ENCODE measurements at regions of chr18 and their contacts with region 1.

Region 1: DNA sequence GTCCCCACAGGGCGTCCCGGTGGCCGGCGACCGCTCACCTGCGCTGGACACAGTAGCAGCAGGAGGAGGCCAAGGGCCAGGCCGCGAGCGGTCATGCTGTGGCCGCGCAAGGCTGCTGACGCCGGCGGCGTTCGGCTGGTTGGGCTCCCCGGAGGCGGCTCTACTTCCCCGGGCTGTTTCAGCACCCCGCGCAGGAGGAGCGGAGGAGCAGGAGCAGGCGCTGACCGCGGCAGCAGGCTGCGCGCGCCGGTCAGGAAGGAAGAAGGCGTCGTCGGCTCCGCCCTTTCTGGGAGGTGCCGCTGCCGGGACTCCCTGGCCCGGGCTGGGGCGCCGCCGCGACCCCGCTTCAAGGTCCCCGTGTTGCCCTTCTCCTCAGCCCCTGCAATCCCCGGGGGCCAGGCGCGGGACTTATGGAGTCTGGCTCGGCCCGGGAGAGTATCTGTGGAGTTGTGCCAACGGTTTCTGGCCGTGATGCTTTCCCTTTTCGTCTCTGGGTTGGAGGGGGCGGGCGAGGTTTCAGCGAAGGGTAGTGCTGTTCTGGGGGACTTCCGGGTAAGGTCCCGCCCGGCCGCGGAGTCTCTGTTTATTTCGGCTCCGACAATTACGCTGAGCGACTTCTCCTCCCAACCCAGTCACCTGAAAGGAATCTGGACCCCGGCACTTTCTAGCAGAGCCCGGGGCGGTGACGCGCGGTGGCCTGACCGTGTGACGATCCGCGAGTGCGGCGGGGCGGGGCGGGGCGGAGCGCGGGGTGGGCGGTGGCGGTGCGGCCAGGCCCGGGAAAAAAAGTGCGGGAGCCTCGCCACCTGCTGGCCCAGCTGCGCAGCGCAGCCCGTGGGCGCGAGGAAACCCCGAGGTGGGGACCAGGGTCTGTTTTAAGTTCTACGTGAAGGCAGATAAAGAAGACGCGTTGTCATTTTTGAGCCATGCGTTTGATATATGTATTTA is at the start of gene NPC1:
- DNase-seq: peak; percentile 97
- H3K4me3 Mint-ChIP-seq: peak within 1 kb of the TSS; percentile 92
- H3K27ac Mint-ChIP-seq: peak within 1 kb of the TSS; percentile 83
- H3K4me1 Mint-ChIP-seq: peaks cover 37% of the 10 kb centered on the region
- H3K27me3 Mint-ChIP-seq: no peaks in the 10 kb centered on the region
- CTCF ChIP-seq: peak; percentile 97
- total RNA-seq, gene NPC1: 82.6 and 84.7 TPM in 2 replicates

Region 2: DNA sequence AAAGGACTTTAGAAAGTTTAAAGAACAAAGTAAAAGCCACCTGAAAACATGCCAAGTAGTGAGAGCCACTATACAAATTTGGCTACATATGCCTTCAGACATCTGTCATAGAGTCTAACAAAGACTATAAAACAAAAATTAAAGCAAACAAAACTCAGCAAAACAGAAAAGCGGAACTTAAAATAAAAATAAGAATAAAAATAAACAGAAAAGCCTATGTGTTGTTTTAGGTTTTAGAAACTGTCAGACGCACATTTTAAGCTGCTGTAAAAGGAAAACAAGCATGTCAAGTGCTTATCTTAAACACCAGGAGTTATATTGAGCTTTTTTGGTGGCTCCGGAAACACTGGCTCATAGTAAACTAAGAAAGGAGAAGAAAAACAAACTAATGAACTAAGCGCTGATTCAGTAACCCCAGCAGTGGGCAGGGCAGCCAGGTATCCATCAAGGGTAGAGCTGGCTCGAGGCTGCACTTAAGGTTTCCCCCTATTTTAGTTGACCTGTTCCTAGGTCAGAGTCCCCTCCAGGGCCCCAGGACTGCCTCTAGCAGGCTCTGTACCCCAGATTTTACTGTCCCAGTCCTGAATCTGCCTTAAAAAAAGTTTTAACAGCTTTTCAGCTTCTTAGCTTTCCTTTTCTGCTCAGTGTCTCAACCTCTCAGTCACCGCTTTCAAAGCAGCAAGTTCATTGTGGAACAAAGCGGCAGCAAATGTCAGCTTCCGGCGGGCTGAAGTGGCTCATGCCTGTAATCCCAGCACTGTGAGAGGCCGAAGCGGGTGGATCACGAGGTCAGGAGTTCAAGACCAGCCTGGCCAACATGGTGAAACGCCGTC is 98.6 kb before region 1 on chr18:
- CTCF ChIA-PET with region 1: no interaction called
- intact Hi-C with region 1: no loop called
- DNase-seq: peak; percentile 15
- H3K4me3 Mint-ChIP-seq: no peak overlapping the region
- H3K27ac Mint-ChIP-seq: no peak overlapping the region
- H3K4me1 Mint-ChIP-seq: peaks cover 14% of the 10 kb centered on the region
- H3K27me3 Mint-ChIP-seq: no peaks in the 10 kb centered on the region
- CTCF ChIP-seq: no peak

Region 3: DNA sequence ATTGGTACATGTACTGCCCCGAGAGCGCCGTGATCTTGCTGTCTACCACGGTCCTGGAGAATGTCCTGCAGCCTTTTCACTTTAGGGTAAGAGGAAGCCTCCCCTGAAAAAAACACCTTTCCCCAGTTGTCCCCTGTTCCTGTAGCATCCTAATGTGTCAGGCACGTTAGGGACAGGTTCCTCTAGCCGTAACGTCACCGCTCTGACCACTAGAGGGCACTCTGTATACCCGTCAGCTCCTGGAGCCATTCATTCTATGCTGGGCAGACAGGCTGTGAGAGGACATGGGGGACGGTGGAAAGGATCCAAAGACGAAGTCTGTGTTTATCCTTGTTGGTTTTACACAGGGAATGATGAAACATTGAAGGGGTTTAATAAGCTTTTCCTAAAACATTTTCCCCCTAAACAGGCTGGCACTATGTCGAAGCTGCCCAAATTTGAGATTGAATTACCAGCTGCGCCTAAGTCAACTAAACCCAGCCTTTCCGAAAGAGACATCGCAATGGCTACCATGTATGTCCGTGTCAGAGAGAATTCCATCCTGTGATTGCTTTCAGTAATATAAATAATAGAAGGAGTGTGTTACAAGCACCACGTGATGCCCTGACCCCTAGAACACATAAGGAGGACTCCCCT is 70.5 kb before region 1 on chr18:
- CTCF ChIA-PET with region 1: no interaction called
- intact Hi-C with region 1: loop called (anchors 5 kb)
- DNase-seq: peak; percentile 79
- H3K4me3 Mint-ChIP-seq: no peak overlapping the region
- H3K27ac Mint-ChIP-seq: no peak overlapping the region
- H3K4me1 Mint-ChIP-seq: peaks cover 8% of the 10 kb centered on the region
- H3K27me3 Mint-ChIP-seq: no peaks in the 10 kb centered on the region
- CTCF ChIP-seq: peak; percentile 88

Measured in Calu3 (cell line).